ENCODE measurements at regions of chr15 and their contacts with region 1.

Region 1: GRCh38 chr15:58749532-58750337 is at the start of gene ADAM10:
- DNase-seq: peak; percentile 100
- ATAC-seq: peak; percentile 92 to 97 (median 95)
- H3K4me3 ChIP-seq: peak within 1 kb of the TSS; percentile 79 to 94 (median 89)
- H3K27ac ChIP-seq: peak within 1 kb of the TSS; percentile 91 to 96 (median 95)
- H3K4me1 ChIP-seq: peaks cover 0 to 24% (median 6%) of the 10 kb centered on the region in 4 donors
- H3K27me3 ChIP-seq: no peaks in the 10 kb centered on the region
- CTCF ChIP-seq: no peak
- POLR2A ChIP-seq: peak; percentile 93
- total RNA-seq, gene ADAM10: 24.1 to 78.1 (median 43.3) TPM

Region 2: GRCh38 chr15:58574631-58575030 is 175.1 kb before region 1 on chr15:
- intact Hi-C with region 1: loop called in 1 of 2 experiments (anchors 10 kb)
- DNase-seq: peak in 1 of 3 donors; percentile 30
- ATAC-seq: peak; percentile 57 to 82 (median 76)
- H3K4me3 ChIP-seq: no peak overlapping the region
- H3K27ac ChIP-seq: no peak overlapping the region
- H3K4me1 ChIP-seq: peaks cover 0 to 24% (median 2%) of the 10 kb centered on the region in 4 donors
- H3K27me3 ChIP-seq: no peaks in the 10 kb centered on the region
- CTCF ChIP-seq: no peak
- POLR2A ChIP-seq: no peak

Region 3: GRCh38 chr15:58641660-58642059 is 108.1 kb before region 1 on chr15:
- intact Hi-C with region 1: no loop called
- DNase-seq: no peak
- ATAC-seq: peak in 1 of 4 donors; percentile 43
- H3K4me3 ChIP-seq: no peak overlapping the region
- H3K27ac ChIP-seq: no peak overlapping the region
- H3K4me1 ChIP-seq: no peaks in the 10 kb centered on the region
- H3K27me3 ChIP-seq: no peaks in the 10 kb centered on the region
- CTCF ChIP-seq: no peak
- POLR2A ChIP-seq: no peak

Measured in right lobe of liver (tissue), 6 donors.